ENCODE measurements at regions of chr12 and their contacts with region 1.

Region 1: GRCh38 chr12:1093166-1093751 is 102.2 kb downstream of the ERC1 start:
- DNase-seq: peak; percentile 45
- H3K4me3 ChIP-seq: no peak overlapping the region
- H3K27ac ChIP-seq: no peak overlapping the region
- H3K4me1 ChIP-seq: no peaks in the 10 kb centered on the region
- H3K27me3 ChIP-seq: no peaks in the 10 kb centered on the region
- CTCF ChIP-seq: peak; percentile 70 to 82

Region 2: GRCh38 chr12:823028-823698 is 270.1 kb before region 1 on chr12:
- CTCF ChIA-PET with region 1: no interaction called
- dilution Hi-C with region 1: no loop called
- in situ Hi-C with region 1: no loop called
- intact Hi-C with region 1: loop called (anchors 5 kb)
- DNase-seq: no peak
- H3K4me3 ChIP-seq: no peak overlapping the region
- H3K27ac ChIP-seq: no peak overlapping the region
- H3K4me1 ChIP-seq: no peaks in the 10 kb centered on the region
- H3K27me3 ChIP-seq: no peaks in the 10 kb centered on the region
- CTCF ChIP-seq: no peak

Region 3: DNA sequence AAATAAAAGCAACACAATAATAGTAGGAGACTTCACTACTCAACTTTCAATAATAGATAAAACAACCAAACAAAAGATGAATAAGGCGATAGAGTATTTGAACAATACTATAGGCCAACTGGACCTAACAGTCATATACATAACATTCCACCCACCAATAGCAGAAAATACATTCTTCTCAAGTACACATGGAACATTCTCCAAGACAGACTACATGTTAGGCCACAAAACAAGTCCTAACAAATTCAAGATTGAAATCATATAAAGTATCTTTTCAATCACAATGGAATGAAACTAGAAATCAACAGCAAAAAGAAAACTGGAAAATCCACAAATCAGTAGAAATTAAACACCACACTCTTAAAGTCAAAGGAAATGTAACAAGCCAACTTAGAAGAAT is 172.6 kb before region 1 on chr12:
- CTCF ChIA-PET with region 1: no interaction called
- dilution Hi-C with region 1: no loop called
- in situ Hi-C with region 1: no loop called
- intact Hi-C with region 1: loop called (anchors 5 kb)
- DNase-seq: peak; percentile 61
- H3K4me3 ChIP-seq: no peak overlapping the region
- H3K27ac ChIP-seq: no peak overlapping the region
- H3K4me1 ChIP-seq: peaks cover 7% of the 10 kb centered on the region
- H3K27me3 ChIP-seq: no peaks in the 10 kb centered on the region
- CTCF ChIP-seq: no peak

Region 4: DNA sequence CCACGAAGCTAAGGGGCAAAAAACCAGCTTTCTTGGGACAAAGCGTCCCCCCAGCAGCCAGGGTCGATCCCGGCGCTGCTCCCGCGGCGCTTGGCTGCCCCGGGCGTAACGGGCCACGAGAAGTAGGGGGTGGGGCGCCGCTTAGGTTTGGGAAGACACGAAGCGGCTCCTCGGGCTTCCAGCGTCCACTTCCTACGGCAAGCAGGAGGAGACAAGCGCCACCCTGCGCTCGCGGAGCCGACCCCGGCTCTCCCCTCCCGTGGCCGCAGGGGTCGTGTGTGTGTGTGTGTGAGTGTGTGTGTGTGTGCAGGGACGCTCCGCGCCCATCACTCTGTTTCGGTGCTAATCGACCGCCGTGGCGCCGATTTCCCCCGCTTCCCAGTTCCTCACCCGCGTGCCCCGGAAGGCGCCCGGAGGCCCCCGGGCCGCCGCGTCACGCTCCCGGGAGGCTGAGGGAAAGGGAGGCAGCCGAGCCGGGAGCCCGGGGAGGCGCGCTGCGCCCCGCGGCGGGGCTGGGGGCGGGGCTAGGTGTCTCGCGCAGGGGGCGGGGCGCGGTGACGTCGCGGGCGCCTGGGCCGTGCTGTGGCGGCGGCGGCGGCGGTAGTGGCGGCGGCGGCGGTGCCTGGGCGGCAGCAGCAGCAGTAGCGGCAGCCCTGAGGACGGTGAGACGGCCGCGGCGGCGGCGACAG is 102.5 kb before region 1 on chr12 and contains the start of gene ERC1:
- CTCF ChIA-PET with region 1: no interaction called
- dilution Hi-C with region 1: no loop called
- in situ Hi-C with region 1: no loop called
- intact Hi-C with region 1: loop called (anchors 5 kb)
- DNase-seq: peak; percentile 85
- H3K4me3 ChIP-seq: peak within 1 kb of the TSS; percentile 80 to 93 (median 90)
- H3K27ac ChIP-seq: peak within 1 kb of the TSS; percentile 92
- H3K4me1 ChIP-seq: peaks cover 25% of the 10 kb centered on the region
- H3K27me3 ChIP-seq: no peaks in the 10 kb centered on the region
- CTCF ChIP-seq: no peak
- total RNA-seq, gene ERC1: 41.0 to 88.7 TPM

Region 5: GRCh38 chr12:1305791-1306500 is 212.7 kb after region 1 on chr12:
- CTCF ChIA-PET with region 1: no interaction called
- dilution Hi-C with region 1: no loop called
- in situ Hi-C with region 1: no loop called
- intact Hi-C with region 1: no loop called
- DNase-seq: no peak
- H3K4me3 ChIP-seq: no peak overlapping the region
- H3K27ac ChIP-seq: no peak overlapping the region
- H3K4me1 ChIP-seq: no peaks in the 10 kb centered on the region
- H3K27me3 ChIP-seq: no peaks in the 10 kb centered on the region
- CTCF ChIP-seq: no peak